OCI-LY7 (cell line): ENCODE measurements at regions of chr4 and their contacts with region 1.

Region 1: GRCh38 chr4:89397464-89397863 is 89.9 kb upstream of the GPRIN3 start:
- DNase-seq: no peak
- H3K4me3 ChIP-seq: no peak overlapping the region
- H3K27ac ChIP-seq: no peak overlapping the region
- H3K4me1 ChIP-seq: no peaks in the 10 kb centered on the region
- CTCF ChIP-seq: no peak

Region 2: DNA sequence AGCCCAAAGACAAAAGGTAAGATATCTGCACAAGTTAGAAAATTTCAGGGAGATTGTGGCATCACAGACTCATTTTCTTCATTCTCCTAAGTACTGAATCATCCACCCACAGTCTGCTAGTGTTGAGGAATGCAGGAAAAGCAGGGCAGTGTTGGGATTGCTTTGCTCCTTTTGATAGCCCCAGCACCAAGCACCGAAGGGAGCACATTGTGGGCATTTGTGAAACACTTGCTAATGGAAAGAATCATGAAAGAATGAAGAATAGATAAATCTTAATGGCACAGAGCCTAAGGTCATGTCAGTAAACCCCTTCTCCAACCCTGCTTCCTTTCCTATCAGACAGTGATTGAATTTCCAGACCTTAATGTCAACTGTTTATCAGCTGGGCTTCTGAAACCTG is 13.2 kb after region 1 on chr4:
- CTCF ChIA-PET with region 1: no interaction called
- POLR2A ChIA-PET with region 1: interaction called, 11 read pairs
- intact Hi-C with region 1: no loop called
- DNase-seq: no peak
- H3K4me3 ChIP-seq: no peak overlapping the region
- H3K27ac ChIP-seq: no peak overlapping the region
- H3K4me1 ChIP-seq: no peaks in the 10 kb centered on the region
- CTCF ChIP-seq: no peak